ENCODE measurements at regions of chr4 and their contacts with region 1.

Region 1: GRCh38 chr4:145936142-145936996 is 2.3 kb downstream of the ZNF827 start:
- DNase-seq: peak; percentile 51 to 85
- H3K4me3 ChIP-seq: peak overlapping the region; percentile 82 to 95
- H3K27ac ChIP-seq: peak overlapping the region; percentile 92 to 99
- H3K4me1 ChIP-seq: peaks cover 0 to 44% (median 22%) of the 10 kb centered on the region in 4 donors
- H3K27me3 ChIP-seq: no peaks in the 10 kb centered on the region
- CTCF ChIP-seq: peak; percentile 13 to 18

Region 2: GRCh38 chr4:145180298-145181090 is 755.9 kb before region 1 on chr4 and contains the start of gene OTUD4:
- intact Hi-C with region 1: loop called (anchors 10 kb)
- DNase-seq: peak; percentile 95 to 97
- H3K4me3 ChIP-seq: peak within 1 kb of the TSS; percentile 84 to 98
- H3K27ac ChIP-seq: peak within 1 kb of the TSS; percentile 97 to 98
- H3K4me1 ChIP-seq: peaks cover 0 to 40% (median 21%) of the 10 kb centered on the region in 4 donors
- H3K27me3 ChIP-seq: no peaks in the 10 kb centered on the region
- CTCF ChIP-seq: no peak

Region 3: DNA sequence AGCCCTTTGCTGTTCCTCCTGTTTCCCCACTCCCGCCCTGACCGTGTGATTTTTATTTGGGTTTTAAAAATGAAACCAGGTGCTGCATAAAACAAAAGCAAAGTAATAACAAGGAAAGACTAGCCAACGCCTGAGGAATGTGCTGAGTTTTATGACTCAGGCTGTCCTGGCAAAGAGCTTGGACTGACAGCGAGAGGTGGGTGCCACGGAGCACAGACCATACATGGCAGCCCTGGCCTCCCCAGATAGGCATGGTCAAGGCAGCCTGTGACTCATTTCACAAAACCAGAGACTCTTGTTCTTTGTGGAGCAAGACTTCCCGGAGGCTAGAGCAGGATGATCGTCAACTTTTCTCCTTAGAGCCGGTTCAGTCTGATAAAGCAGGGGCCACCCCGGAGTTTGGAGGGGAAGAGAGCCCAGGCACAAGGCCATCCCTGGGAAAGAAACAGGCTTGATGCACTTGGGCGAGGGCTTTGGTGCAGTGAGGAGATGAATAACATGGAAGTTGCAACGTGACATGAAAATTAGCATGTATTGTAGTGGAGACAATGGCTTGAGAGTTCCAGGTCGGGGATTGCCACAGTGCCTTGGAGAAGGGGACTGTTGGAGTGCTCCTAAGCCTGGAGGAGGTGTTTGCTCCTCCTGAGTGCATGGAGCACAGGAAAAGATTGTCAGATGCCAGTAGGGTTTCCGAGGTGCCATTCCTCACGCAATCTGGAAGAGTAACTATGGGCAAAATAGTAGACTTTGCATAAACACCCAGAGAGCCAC is 201.6 kb before region 1 on chr4:
- intact Hi-C with region 1: loop called (anchors 5 kb)
- DNase-seq: peak; percentile 85 to 95
- H3K4me3 ChIP-seq: peak overlapping the region; percentile 34 to 71
- H3K27ac ChIP-seq: peak overlapping the region; percentile 93 to 99
- H3K4me1 ChIP-seq: peaks cover 0 to 52% (median 41%) of the 10 kb centered on the region in 4 donors
- H3K27me3 ChIP-seq: no peaks in the 10 kb centered on the region
- CTCF ChIP-seq: no peak

Region 4: GRCh38 chr4:145887241-145887991 is 49.0 kb before region 1 on chr4:
- intact Hi-C with region 1: loop called (anchors 10 kb)
- DNase-seq: peak in 1 of 2 donors; percentile 41
- H3K4me3 ChIP-seq: no peak overlapping the region
- H3K27ac ChIP-seq: peak overlapping the region; percentile 58 to 68
- H3K4me1 ChIP-seq: peaks cover 0 to 25% (median 18%) of the 10 kb centered on the region in 4 donors
- H3K27me3 ChIP-seq: no peaks in the 10 kb centered on the region
- CTCF ChIP-seq: peak; percentile 23 to 36

Region 5: GRCh38 chr4:146175541-146176453 is 239.4 kb after region 1 on chr4 and contains the start of gene LSM6:
- intact Hi-C with region 1: loop called (anchors 10 kb)
- DNase-seq: peak; percentile 81 to 91
- H3K4me3 ChIP-seq: peak within 1 kb of the TSS; percentile 91 to 95
- H3K27ac ChIP-seq: peak within 1 kb of the TSS; percentile 89 to 97
- H3K4me1 ChIP-seq: peaks cover 0 to 35% (median 22%) of the 10 kb centered on the region in 4 donors
- H3K27me3 ChIP-seq: no peaks in the 10 kb centered on the region
- CTCF ChIP-seq: peak; percentile 16 to 24